ENCODE measurements at regions of chr7 and their contacts with region 1.

Region 1: DNA sequence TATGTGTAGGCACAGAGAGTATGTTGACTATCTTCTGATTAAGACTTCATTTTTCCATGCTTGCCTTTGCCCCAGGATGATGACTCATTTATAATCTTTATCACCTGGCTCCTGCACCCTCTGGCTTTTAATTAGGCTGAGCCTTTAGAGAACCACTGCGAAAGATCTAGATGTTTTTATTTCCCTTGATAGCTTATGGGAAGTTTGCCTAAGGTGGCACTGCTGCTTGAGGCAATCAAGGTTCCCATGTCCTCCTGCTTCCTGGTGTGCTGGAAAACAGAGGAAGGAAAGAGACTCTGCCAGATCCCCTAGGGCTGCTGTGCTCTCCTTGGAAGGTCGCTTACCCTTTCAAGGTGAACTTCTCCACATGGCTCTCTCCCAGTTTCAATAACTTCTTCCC is 114.7 kb downstream of the ARL4A start:
- DNase-seq: peak in 2 of 3 donors; percentile 43 to 64
- ATAC-seq: peak; percentile 87
- H3K4me3 ChIP-seq: no peak overlapping the region
- H3K4me1 ChIP-seq: peaks cover 5% of the 10 kb centered on the region
- CTCF ChIP-seq: no peak

Region 2: GRCh38 chr7:12686894-12687717 is 115.0 kb before region 1 on chr7 and contains the start of gene ARL4A:
- intact Hi-C with region 1: no loop called
- DNase-seq: peak; percentile 98 to 100 (median 98)
- ATAC-seq: peak; percentile 89
- H3K4me3 ChIP-seq: peak within 1 kb of the TSS; percentile 60
- H3K4me1 ChIP-seq: no peaks in the 10 kb centered on the region
- CTCF ChIP-seq: no peak
- total RNA-seq, gene ARL4A: 55.3 to 88.3 (median 73.4) TPM

Region 3: DNA sequence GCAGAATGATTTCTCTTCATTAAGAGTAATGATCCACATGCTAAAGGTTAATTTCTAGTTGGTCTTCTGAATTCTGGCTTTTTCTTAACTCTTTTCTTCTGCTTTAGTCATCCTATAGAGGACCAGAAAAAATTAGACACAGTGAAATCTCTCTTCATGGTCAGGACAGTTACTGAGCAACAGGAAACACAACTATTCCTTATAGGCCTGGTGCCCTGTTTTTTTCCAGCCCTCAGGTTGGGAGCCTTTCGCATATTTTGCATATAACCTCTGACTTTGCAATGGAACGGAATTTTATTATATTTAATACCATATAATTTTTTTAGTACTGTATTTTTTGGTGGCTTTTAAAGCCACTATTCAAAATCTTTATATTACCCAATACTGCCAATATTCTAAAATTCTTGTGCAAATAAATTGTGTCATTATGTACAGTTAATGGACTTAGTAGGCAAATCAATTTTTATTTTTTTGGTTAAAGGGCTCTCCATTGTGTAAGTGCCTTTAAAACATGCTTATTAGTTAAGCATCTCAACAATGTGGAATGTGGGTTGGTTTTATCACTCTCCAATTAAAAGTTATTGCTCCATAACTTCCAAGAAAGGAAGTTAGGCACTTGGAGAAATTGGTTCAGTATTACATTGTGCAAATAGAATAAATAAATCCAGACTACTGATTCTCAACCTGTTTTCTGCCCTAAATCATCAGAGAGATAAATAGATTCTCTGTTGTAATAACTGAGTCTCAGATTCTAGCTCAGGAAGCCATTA is 92.2 kb before region 1 on chr7:
- intact Hi-C with region 1: loop called in 1 of 2 experiments (anchors 5 kb)
- DNase-seq: no peak
- ATAC-seq: peak; percentile 51
- H3K4me3 ChIP-seq: no peak overlapping the region
- H3K4me1 ChIP-seq: peaks cover 11% of the 10 kb centered on the region
- CTCF ChIP-seq: no peak